ENCODE measurements at regions of chr7 and their contacts with region 1.

Region 1: DNA sequence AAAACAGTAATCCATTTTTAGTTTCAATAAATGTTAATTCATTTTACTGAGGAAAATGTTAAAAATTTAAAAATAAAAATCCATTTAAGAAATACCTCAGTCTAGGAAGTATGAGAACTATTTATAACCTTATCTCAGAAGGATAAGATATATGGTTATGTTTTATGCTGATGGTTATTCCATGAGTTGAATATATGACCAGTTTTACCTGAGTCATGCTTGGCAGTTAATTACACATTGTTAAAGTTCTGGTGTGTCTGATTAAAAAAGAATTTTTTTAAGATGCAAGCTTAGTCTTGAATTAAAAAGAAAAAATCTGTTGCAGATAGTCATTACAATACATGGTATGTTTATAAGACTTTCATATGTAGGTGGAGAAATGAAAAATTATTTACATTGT is 191.7 kb downstream of the ARL4A start:
- DNase-seq: no peak
- H3K4me3 ChIP-seq: no peak overlapping the region
- H3K27ac ChIP-seq: no peak overlapping the region
- H3K4me1 ChIP-seq: no peaks in the 10 kb centered on the region
- H3K27me3 ChIP-seq: no peaks in the 10 kb centered on the region
- CTCF ChIP-seq: no peak
- POLR2A ChIP-seq: no peak

Region 2: GRCh38 chr7:12929476-12930140 is 50.5 kb after region 1 on chr7:
- intact Hi-C with region 1: loop called (anchors 2 kb)
- DNase-seq: no peak
- H3K4me3 ChIP-seq: no peak overlapping the region
- H3K27ac ChIP-seq: no peak overlapping the region
- H3K4me1 ChIP-seq: no peaks in the 10 kb centered on the region
- H3K27me3 ChIP-seq: no peaks in the 10 kb centered on the region
- CTCF ChIP-seq: no peak
- POLR2A ChIP-seq: no peak

Measured in breast epithelium (tissue), 4 donors.